BJ (cell line): ENCODE measurements at regions of chr14 and their contacts with region 1.

Region 1: GRCh38 chr14:77067632-77068514 is 30.2 kb upstream of the CIPC start:
- DNase-seq: no peak
- H3K4me3 ChIP-seq: no peak overlapping the region
- H3K27me3 ChIP-seq: no peaks in the 10 kb centered on the region
- CTCF ChIP-seq: peak; percentile 94

Region 2: DNA sequence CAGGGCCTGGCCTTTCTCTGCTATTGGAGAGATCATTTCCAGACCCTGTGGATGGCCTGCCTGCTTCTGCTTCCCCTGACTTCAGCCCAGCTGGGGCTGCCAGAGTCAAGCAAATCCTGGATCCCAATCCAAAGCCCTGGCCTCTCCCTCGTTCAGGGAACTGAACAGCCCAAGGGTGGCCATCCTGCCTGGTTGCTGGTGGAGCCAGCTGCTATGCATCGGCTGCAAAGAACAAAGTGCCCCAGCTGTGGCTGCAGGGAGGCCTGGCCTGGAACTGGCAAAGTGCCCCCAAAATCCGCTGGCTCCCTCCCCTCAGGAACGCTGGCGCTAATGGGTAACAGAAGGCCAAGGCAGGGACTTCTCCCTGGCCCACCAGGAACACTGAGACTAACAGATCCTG is 185.2 kb before region 1 on chr14:
- CTCF ChIA-PET with region 1: interaction called, 396 read pairs
- POLR2A ChIA-PET with region 1: no interaction called
- DNase-seq: no peak
- H3K4me3 ChIP-seq: no peak overlapping the region
- H3K27me3 ChIP-seq: no peaks in the 10 kb centered on the region; the same call in 1 of the 2 replicates
- CTCF ChIP-seq: no peak

Region 3: GRCh38 chr14:76956316-76957090 is 111.4 kb before region 1 on chr14:
- CTCF ChIA-PET with region 1: interaction called, 19 read pairs
- POLR2A ChIA-PET with region 1: interaction called, 7 read pairs
- DNase-seq: peak; percentile 78
- H3K4me3 ChIP-seq: peak overlapping the region; percentile 15
- H3K27me3 ChIP-seq: no peaks in the 10 kb centered on the region
- CTCF ChIP-seq: 0 out of 2 replicates have a peak, but pooled peaks have one; percentile 2

Region 4: GRCh38 chr14:77053046-77053841 is 14.6 kb before region 1 on chr14:
- CTCF ChIA-PET with region 1: interaction called, 29 read pairs
- POLR2A ChIA-PET with region 1: no interaction called
- DNase-seq: no peak
- H3K4me3 ChIP-seq: no peak overlapping the region
- H3K27me3 ChIP-seq: no peaks in the 10 kb centered on the region
- CTCF ChIP-seq: peak; percentile 90

Region 5: GRCh38 chr14:77097700-77098528 is 30.0 kb after region 1 on chr14 and contains the start of gene CIPC:
- CTCF ChIA-PET with region 1: interaction called, 74 read pairs
- POLR2A ChIA-PET with region 1: no interaction called
- DNase-seq: peak; percentile 87
- H3K4me3 ChIP-seq: peak within 1 kb of the TSS; percentile 90
- H3K27me3 ChIP-seq: no peaks in the 10 kb centered on the region
- CTCF ChIP-seq: no peak
- polyA plus RNA-seq, gene CIPC: 14.2 and 15.5 TPM in 2 replicates